Mammary epithelial cell (primary cell): ENCODE measurements at regions of chr21 and their contacts with region 1.

Region 1: GRCh38 chr21:41068967-41069642 is 98.9 kb upstream of the BACE2 start:
- DNase-seq: peak; percentile 65
- H3K4me3 ChIP-seq: no peak overlapping the region
- H3K27ac ChIP-seq: no peak overlapping the region
- H3K4me1 ChIP-seq: peaks cover 3% of the 10 kb centered on the region
- H3K27me3 ChIP-seq: no peaks in the 10 kb centered on the region
- CTCF ChIP-seq: peak; percentile 79 to 98

Region 2: GRCh38 chr21:39867198-39867650 is 1201.9 kb before region 1 on chr21 and contains the start of gene PCP4:
- CTCF ChIA-PET with region 1: no interaction called
- dilution Hi-C with region 1: no loop called
- in situ Hi-C with region 1: no loop called
- intact Hi-C with region 1: loop called (anchors 5 kb)
- DNase-seq: peak; percentile 42
- H3K4me3 ChIP-seq: no peak within 1 kb of the TSS
- H3K27ac ChIP-seq: no peak within 1 kb of the TSS
- H3K4me1 ChIP-seq: no peaks in the 10 kb centered on the region
- H3K27me3 ChIP-seq: peaks cover 4% of the 10 kb centered on the region
- CTCF ChIP-seq: peak; percentile 91 to 95
- total RNA-seq, gene PCP4: not detected

Region 3: DNA sequence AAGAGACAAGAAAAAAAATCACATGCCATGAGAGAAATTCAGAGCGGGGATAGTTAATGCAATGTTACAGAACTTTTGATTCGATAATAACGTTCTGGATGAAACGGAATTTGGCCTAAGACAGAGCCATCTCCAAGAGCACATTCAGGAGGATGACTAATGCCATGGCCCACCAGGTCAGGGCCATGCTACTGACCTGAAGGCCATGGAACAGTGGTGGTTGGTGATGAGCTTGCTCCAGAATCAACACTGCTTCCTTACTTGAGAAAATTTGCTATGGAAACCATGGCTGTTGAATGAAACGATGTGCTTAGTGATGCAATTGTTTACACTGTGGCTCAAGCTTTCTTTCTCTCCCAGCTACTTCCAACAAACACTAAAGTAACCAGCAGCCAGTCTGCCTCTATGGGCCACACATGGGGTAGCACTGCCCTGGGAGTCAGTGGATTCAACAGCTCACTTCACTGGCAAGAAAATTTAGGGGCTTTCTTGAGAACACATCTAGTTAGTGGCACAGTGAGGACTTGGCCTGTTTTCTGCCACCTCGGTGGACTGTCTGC is 902.7 kb before region 1 on chr21:
- CTCF ChIA-PET with region 1: no interaction called
- dilution Hi-C with region 1: no loop called
- in situ Hi-C with region 1: loop called in 1 of 2 experiments (anchors 25 kb)
- intact Hi-C with region 1: no loop called
- DNase-seq: no peak
- H3K4me3 ChIP-seq: no peak overlapping the region
- H3K27ac ChIP-seq: no peak overlapping the region
- H3K4me1 ChIP-seq: no peaks in the 10 kb centered on the region
- H3K27me3 ChIP-seq: no peaks in the 10 kb centered on the region
- CTCF ChIP-seq: peak in 1 of 2 donors; percentile 12

Region 4: DNA sequence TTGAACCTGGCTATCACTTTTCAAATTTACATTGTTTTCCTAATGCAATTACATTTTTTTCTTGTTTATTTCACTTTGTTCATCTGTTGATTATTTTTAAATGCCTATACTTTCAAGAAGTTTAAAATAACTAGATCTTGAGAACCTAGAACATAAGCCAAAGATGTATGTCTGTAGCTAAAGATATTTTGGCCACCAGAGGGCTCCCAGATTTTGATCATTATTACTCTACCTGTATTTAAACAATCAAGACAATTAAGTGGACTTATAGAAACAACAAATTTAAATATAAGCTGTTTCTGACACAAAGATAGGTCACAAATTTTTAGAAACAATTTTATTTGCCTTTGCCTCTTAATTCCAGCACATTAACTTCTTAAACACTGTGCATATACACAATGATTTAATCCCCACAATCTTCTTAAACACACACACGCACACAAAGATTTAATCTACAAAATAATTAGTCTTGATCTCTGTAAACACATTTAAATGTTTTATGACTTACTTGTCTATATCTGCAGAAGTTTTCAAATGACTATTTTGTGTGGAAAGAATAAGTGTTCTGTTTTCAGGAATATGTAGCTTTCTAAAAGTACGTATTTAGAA is 602.1 kb before region 1 on chr21:
- CTCF ChIA-PET with region 1: no interaction called
- dilution Hi-C with region 1: no loop called
- in situ Hi-C with region 1: loop called (anchors 10 kb)
- intact Hi-C with region 1: loop called (anchors 1 kb)
- DNase-seq: peak; percentile 8
- H3K4me3 ChIP-seq: no peak overlapping the region
- H3K27ac ChIP-seq: no peak overlapping the region
- H3K4me1 ChIP-seq: no peaks in the 10 kb centered on the region
- H3K27me3 ChIP-seq: no peaks in the 10 kb centered on the region
- CTCF ChIP-seq: peak; percentile 52 to 64

Region 5: DNA sequence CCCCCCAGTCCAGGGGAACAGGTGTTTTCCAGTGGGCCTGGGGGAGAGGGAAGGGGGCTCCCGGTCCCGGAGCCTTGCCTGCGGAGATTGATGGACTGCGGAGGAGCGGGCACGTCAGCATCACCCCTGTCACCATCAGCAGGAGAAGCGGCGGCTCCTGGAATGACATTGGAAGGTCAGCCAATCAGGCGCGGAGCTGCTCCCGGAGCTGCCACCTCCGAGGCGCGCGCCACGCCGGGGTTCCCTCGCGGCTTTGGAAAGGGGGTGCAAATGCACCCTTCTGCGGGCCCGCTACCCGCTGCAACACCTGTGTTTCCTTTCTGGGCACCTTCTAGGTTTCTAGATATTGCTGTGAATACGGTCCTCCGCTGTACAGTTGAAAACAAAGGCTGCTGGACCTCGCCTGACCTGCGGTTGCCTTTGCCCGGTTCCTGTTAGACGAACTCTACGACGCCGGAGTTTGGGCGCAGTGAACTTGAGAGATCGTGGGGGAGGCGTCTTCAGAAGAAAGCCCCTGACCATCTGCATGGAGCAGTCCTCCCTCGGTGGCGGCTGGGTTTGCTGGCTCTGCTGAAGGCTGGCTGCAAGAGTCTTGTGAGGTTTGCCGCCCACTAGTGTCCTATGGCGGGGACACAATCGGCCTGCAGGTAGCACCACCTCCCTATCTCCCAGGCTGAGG is 227.4 kb before region 1 on chr21:
- CTCF ChIA-PET with region 1: interaction called, 6 read pairs
- dilution Hi-C with region 1: no loop called
- in situ Hi-C with region 1: no loop called
- intact Hi-C with region 1: loop called (anchors 1 kb)
- DNase-seq: peak; percentile 42
- H3K4me3 ChIP-seq: peak overlapping the region; percentile 44 to 56 (median 55)
- H3K27ac ChIP-seq: peak overlapping the region; percentile 17
- H3K4me1 ChIP-seq: peaks cover 74% of the 10 kb centered on the region
- H3K27me3 ChIP-seq: no peaks in the 10 kb centered on the region
- CTCF ChIP-seq: peak; percentile 59 to 91